ENCODE measurements at regions of chr4 and their contacts with region 1.

Region 1: GRCh38 chr4:113761620-113762185 is at the start of gene CAMK2D:
- DNase-seq: peak; percentile 9
- H3K4me3 ChIP-seq: peak within 1 kb of the TSS; percentile 65 to 84 (median 74)
- H3K27ac ChIP-seq: peak within 1 kb of the TSS; percentile 95 to 100 (median 99)
- H3K4me1 ChIP-seq: peaks cover 0 to 32% (median 18%) of the 10 kb centered on the region in 3 donors
- H3K27me3 ChIP-seq: no peaks in the 10 kb centered on the region
- CTCF ChIP-seq: peak; percentile 19 to 62 (median 50)
- POLR2A ChIP-seq: peak in 1 of 4 donors; percentile 47
- total RNA-seq, gene CAMK2D: 30.7 to 47.7 (median 38.2) TPM

Region 2: DNA sequence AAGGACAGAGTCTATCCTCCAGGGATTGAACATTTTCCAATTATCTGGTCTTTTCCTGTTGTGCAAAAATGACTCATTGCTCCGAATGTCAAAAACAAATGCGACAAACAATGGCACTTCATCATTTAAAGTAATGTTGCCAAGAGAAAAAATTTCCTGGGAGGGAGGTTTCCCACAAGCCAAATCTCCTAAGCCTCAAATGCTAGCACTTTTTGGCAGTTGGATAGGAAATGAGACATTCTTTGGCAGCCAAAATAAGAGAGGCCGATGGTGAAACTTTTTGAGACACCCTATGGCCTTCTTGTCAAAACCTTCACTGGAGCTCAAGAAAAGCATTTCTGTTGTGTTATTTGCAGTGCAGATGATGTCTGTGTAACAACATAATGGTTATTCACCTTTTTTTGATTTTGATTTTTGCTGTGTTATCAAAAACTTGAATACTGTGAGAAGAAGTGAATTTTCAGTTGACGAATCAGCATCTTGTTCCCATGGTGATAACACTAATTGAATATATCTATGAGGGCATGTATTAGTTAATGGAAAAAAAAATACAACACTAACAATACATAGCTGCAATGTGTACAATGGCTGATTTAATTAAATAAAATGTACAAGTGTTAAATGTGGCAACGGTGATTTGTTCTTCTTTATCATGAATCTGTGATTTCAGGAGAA is 378.5 kb before region 1 on chr4:
- intact Hi-C with region 1: loop called (anchors 5 kb)
- DNase-seq: no peak
- H3K4me3 ChIP-seq: no peak overlapping the region
- H3K27ac ChIP-seq: peak overlapping the region in 3 of 4 donors; percentile 50 to 58 (median 50)
- H3K4me1 ChIP-seq: peaks cover 9 to 49% (median 21%) of the 10 kb centered on the region in 3 donors
- H3K27me3 ChIP-seq: no peaks in the 10 kb centered on the region
- CTCF ChIP-seq: no peak
- POLR2A ChIP-seq: no peak

Region 3: DNA sequence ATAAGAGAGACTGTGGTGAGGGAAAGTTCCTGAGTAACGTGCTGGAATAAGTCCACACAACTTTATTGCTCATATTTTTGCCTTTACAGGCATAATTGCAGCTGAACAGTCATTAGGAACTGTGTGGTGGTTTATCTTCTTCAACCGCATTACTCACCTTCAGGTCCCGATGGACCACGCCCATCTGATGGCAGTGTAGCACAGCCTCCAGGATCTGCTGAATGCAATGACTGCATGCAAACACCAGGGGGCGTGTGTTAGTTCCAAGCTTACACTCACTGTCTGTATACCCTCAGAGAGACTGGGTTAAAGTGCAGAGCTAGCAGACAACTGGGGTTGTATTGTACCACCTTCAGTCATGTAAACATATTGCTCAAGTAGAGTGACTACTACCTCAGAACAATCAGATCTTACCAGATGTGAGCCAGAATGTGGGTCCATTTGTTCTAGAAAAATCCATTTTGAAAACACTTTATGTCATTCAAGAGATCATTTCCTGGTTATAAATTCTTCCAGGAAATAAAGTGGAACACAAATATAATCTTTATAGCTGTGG is 214.1 kb before region 1 on chr4:
- intact Hi-C with region 1: loop called (anchors 5 kb)
- DNase-seq: peak; percentile 42
- H3K4me3 ChIP-seq: no peak overlapping the region
- H3K27ac ChIP-seq: peak overlapping the region in 3 of 4 donors; percentile 44 to 59 (median 56)
- H3K4me1 ChIP-seq: peaks cover 0 to 11% (median 0%) of the 10 kb centered on the region in 3 donors
- H3K27me3 ChIP-seq: no peaks in the 10 kb centered on the region
- CTCF ChIP-seq: peak; percentile 84 to 99 (median 96)
- POLR2A ChIP-seq: no peak

Measured in esophagus squamous epithelium (tissue), 5 donors.